AG04449 (cell line): ENCODE measurements at regions of chr2 and their contacts with region 1.

Region 1: GRCh38 chr2:10097352-10098148 is 17.3 kb upstream of the CYS1 start:
- DNase-seq: no peak
- H3K4me3 ChIP-seq: no peak overlapping the region
- CTCF ChIP-seq: peak; percentile 97

Region 2: GRCh38 chr2:10036095-10036884 is 61.3 kb before region 1 on chr2:
- CTCF ChIA-PET with region 1: no interaction called
- POLR2A ChIA-PET with region 1: no interaction called
- DNase-seq: peak; percentile 31
- H3K4me3 ChIP-seq: no peak overlapping the region
- CTCF ChIP-seq: peak; percentile 61

Region 3: DNA sequence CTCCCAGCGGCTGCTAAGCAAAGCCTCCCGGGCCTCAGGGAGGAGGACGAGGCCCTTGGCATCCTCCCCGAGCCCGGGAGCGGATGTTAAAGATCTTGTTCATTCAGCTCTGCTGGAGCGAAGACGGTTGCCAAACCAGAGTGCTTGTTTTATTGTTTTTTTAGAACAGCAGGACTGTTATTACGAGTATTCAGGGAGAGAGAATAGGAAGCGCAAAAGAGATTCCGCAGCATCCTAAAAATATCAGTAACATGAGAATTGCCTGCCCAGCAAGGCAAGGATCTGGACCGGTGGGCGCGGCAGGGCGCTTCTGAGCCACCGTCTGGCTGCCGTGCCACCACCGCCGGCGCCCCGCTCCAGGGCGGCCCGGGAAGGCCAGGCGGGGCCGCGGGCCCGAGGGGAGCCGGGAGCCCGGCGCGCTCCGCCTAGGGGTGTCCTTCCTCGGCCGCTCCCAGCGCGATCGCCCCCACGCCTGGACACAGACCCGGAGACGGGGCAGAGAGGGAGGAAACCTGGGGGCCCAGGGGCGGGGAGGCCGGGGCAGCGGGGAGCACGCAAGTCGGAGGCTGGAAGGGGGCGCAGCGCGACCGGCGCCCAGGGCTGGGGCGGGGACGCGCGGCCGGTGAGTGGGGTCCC is 18.2 kb before region 1 on chr2:
- CTCF ChIA-PET with region 1: interaction called, 173 read pairs
- POLR2A ChIA-PET with region 1: interaction called, 3 read pairs
- DNase-seq: no peak
- H3K4me3 ChIP-seq: peak overlapping the region; percentile 45
- CTCF ChIP-seq: no peak

Region 4: GRCh38 chr2:10109311-10109710 is 11.8 kb after region 1 on chr2:
- CTCF ChIA-PET with region 1: interaction called, 104 read pairs
- POLR2A ChIA-PET with region 1: interaction called, 3 read pairs
- DNase-seq: no peak
- H3K4me3 ChIP-seq: no peak overlapping the region
- CTCF ChIP-seq: no peak

Region 5: DNA sequence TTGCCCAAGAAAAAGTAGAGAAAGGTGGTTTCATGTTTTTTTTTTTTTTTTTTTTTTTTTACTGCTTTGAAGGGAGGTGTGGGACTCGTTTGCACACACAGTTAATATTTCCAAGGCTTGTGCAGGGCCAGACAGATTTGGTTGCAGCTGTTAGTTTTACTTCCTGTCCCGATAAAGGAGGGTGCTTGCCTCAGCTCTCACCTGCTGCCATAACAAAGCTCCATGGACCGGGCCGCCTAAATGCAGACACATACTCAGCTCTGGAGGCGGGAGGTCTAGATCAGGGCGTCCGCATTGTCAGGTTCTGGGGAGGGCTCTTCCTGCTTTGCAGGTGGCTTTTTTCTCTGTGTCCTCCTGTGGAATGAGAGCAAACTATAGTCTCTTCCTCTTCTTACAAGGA is 280.6 kb after region 1 on chr2:
- CTCF ChIA-PET with region 1: no interaction called
- POLR2A ChIA-PET with region 1: no interaction called
- DNase-seq: no peak
- H3K4me3 ChIP-seq: no peak overlapping the region
- CTCF ChIP-seq: no peak